ENCODE measurements at regions of chr16 and their contacts with region 1.

Region 1: DNA sequence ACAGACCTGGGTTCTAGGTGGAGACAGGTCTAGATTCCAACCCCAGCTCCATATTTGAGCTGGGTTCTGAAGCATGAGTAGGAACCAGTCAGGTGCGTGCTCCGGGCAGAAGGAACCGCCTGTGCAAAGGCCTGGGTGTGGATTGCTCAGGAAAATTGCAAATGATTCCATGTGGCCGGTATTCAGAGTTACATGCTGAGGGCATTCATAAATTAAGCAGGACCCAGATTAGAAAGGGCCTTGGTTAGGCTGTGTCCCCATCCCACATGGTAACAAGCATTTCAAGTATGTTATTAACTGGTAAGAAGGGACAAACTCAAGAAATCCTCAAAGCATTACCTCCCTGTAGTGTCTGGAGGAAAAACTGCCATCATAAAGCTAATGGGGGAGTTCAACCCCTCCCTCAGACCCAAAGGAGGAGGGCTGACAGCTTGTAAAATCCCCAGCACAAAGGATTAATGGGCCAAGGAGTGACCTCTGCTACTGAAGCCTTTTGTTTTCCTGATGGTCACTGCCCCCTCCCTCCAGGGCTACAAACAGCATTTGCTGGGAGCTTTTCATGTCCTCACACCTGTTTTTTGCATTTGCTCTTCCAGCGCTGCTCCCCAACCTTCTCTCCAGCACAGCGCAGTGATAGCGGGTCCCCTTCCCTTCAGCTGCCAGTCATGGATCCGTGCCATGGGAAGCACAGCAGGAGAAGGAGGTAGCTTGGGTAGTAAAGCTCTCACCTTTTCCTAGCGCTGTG is 218.0 kb downstream of the C16orf95 start:
- DNase-seq: no peak
- H3K4me3 ChIP-seq: no peak overlapping the region
- H3K27ac ChIP-seq: no peak overlapping the region
- H3K4me1 ChIP-seq: no peaks in the 10 kb centered on the region
- H3K27me3 ChIP-seq: peaks cover 2% of the 10 kb centered on the region
- CTCF ChIP-seq: no peak

Region 2: DNA sequence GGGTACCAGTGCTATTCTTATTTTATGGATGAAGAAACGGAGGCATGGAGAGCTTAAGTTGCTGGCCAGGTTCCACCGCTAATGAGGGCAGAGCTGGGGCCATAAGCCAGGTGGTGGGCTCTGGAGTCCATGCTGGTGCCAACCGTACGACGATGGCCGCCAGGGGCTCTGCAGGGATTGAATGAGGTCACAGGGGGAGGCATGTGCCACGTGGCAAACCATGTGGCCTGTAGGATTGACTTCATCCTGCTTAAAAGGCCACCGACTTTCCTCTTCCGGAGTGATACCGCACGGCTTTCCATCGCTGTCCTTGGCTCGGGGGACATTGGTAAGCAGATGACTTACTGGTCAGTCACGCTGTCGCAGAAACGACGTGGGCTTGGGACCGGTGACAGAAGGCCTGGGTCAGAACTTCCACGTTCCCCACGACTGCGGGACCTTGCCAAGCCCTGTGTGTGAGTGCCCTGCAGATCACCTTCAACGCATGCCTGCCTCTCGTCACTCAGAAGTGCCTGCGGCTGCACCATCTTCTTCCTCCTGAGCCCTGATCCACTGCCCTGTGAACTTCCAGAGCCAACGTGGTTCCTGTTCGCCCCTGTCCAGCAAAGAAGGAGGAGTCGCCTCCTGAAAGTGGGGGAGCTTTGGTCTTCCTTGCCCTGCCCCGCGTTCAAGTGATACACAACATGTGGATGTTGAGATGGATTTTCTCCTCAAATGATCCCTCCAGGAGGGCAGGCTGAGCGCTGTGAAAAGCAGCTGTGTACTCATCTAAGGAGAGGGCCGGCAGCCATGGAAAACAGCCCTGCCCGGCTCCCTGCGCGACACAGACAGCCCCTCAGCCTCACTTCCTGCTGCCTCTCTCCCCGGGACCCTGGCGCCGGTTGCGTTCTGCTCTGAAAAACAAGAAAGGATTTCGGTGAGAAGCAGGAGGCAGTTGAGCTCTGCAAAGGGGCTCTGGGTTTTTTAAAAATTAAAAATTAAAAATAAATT is 41.4 kb after region 1 on chr16:
- CTCF ChIA-PET with region 1: no interaction called
- dilution Hi-C with region 1: loop called (anchors 5 kb)
- in situ Hi-C with region 1: no loop called
- intact Hi-C with region 1: no loop called
- DNase-seq: no peak
- H3K4me3 ChIP-seq: no peak overlapping the region
- H3K27ac ChIP-seq: no peak overlapping the region
- H3K4me1 ChIP-seq: no peaks in the 10 kb centered on the region
- H3K27me3 ChIP-seq: no peaks in the 10 kb centered on the region
- CTCF ChIP-seq: no peak